HAP-1 (cell line): ENCODE measurements at regions of chr1 and their contacts with region 1.

Region 1: DNA sequence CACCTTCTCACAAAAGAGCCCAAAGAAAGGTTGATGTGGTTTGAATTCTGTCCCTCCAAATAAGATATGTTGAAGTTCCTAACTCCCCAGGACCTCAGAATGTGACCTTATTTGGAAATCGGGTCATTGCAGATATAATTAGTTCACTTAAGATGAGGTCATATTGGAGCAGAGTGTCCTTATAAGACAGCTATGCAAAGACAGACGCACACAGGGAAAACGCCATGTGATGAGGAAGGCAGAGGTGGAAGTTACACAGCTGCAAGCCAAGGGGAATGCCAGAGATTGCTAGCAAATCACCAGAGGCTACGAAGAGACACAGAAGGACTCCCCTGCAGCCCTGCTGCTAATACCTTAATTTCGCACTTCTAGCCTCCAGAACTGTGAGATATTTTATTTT is 5.2 kb upstream of the ABCB10 start:
- DNase-seq: no peak
- H3K4me3 ChIP-seq: no peak overlapping the region
- H3K4me1 ChIP-seq: peaks cover 13% of the 10 kb centered on the region
- H3K27me3 ChIP-seq: no peaks in the 10 kb centered on the region

Region 2: GRCh38 chr1:229625915-229626831 is 62.5 kb after region 1 on chr1 and contains the starts of genes TAF5L and URB2:
- in situ Hi-C with region 1: loop called (anchors 5 kb)
- DNase-seq: peak; percentile 82 to 89
- H3K4me3 ChIP-seq: peak within 1 kb of the TSS; percentile 99
- H3K4me1 ChIP-seq: peaks cover 15% of the 10 kb centered on the region
- H3K27me3 ChIP-seq: no peaks in the 10 kb centered on the region

Region 3: DNA sequence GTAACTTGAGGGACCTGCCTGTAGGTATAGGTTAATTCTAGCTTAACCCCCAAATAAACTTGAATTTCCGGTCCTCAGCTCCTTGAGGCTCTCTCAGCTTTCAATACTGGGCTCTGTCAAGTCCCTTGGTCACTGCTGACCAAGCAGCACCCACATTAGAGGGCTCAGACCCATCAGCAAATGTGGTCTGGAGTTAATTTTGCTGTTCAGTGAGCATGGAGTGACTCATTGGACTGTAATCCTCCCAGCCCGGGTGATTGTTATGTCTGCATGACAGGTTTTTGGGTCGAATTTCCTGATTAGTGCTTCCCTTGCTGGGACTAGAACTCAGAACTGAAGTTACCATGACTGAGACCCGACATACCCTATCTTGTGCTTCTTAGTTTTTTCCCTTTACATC is 193.0 kb after region 1 on chr1:
- in situ Hi-C with region 1: no loop called
- DNase-seq: no peak
- H3K4me3 ChIP-seq: no peak overlapping the region
- H3K4me1 ChIP-seq: no peaks in the 10 kb centered on the region
- H3K27me3 ChIP-seq: no peaks in the 10 kb centered on the region